ENCODE measurements at regions of chr16 and their contacts with region 1.

Region 1: DNA sequence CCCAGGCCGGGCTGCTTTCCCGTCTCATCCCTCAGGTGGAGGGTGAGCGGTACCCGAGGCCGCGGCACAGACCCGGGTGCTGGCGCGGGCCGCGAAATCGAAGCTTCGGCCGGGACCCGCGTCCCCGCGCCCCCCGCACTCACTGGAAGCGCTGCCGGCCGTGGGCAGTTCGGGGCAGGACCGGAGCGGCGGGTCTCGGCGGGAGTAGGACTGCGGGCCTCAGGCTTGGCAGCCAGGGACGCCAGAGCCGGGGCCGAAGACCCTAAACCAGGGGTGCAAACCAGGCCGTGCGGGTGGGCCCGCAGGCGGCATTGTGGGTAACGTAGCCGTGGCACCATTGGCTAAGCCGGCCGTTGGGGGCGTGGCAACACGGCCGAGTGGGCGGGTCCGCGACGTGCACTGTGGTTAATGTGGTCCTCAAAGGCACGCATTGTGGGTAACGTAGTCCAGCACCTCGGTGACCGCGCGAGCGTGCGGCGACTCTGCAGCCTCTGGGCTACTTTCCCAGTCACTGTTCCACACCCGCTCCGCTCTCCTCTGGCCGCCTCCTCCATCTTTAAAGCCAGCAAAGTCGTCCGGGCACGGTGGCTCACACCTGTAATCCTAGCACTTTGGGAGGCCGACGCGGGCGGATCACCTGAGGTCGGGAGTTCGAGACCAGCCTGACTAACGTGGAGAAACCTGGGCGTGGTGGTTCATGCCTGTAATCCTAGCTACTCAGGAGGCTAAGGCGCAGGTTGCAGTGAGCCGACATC is at the start of gene ZNF500:
- DNase-seq: peak; percentile 98
- H3K4me3 Mint-ChIP-seq: peak within 1 kb of the TSS; percentile 93
- H3K27ac Mint-ChIP-seq: peak within 1 kb of the TSS; percentile 93
- H3K4me1 Mint-ChIP-seq: peaks cover 35% of the 10 kb centered on the region
- H3K27me3 Mint-ChIP-seq: no peaks in the 10 kb centered on the region
- total RNA-seq, gene ZNF500: 8.9 to 11.2 TPM

Region 2: DNA sequence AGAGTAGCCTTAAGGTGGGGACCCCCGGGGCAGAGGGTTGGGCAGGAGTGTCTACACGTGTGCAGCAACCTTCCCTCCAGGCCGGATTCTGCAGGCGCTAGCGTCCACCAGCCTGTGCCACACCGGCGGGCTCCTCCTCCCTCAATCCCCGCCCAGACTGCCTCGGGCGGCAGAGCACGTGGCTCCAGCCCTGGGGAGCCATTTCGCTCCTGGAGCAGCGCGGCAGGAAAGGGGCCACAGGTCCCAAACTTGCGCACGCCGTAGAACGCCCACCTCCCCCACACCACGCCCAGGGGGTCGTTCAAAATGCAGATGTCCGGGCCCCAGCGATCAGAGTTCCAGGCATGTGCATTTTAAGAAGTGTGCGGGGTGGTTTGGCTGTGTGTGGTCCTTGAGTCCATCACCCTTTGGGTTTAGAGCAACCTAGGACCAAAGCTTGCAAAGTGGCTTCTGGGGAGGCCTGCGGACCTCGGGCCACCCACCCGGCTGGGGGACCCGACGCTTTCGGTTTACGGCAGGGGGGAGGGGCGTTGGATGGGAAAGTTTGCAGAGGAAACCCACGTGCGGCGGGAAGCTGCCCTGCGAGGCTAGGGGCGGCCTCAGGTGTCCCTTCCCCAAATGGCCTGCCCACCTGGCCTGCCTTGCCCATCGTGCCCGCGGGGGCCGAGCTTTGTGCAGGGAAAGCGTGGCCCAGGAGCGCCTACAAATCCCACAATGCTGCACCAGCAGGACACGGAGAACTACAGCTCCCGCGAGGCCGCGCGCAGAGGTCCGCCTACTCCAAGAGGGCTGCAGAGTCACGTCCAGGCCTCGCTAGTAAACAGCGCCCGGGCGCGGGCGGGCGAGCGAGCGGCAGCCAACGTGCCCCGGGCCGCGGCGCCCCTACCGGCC is 495.6 kb before region 1 on chr16:
- CTCF ChIA-PET with region 1: no interaction called
- intact Hi-C with region 1: loop called (anchors 5 kb)
- DNase-seq: peak; percentile 95
- H3K4me3 Mint-ChIP-seq: peak overlapping the region; percentile 86
- H3K27ac Mint-ChIP-seq: peak overlapping the region; percentile 94
- H3K4me1 Mint-ChIP-seq: peaks cover 12% of the 10 kb centered on the region
- H3K27me3 Mint-ChIP-seq: no peaks in the 10 kb centered on the region

Region 3: GRCh38 chr16:4544473-4544872 is 222.6 kb before region 1 on chr16:
- CTCF ChIA-PET with region 1: no interaction called
- intact Hi-C with region 1: no loop called
- DNase-seq: no peak
- H3K4me3 Mint-ChIP-seq: no peak overlapping the region
- H3K27ac Mint-ChIP-seq: no peak overlapping the region
- H3K4me1 Mint-ChIP-seq: peaks cover 4% of the 10 kb centered on the region
- H3K27me3 Mint-ChIP-seq: no peaks in the 10 kb centered on the region

Region 4: DNA sequence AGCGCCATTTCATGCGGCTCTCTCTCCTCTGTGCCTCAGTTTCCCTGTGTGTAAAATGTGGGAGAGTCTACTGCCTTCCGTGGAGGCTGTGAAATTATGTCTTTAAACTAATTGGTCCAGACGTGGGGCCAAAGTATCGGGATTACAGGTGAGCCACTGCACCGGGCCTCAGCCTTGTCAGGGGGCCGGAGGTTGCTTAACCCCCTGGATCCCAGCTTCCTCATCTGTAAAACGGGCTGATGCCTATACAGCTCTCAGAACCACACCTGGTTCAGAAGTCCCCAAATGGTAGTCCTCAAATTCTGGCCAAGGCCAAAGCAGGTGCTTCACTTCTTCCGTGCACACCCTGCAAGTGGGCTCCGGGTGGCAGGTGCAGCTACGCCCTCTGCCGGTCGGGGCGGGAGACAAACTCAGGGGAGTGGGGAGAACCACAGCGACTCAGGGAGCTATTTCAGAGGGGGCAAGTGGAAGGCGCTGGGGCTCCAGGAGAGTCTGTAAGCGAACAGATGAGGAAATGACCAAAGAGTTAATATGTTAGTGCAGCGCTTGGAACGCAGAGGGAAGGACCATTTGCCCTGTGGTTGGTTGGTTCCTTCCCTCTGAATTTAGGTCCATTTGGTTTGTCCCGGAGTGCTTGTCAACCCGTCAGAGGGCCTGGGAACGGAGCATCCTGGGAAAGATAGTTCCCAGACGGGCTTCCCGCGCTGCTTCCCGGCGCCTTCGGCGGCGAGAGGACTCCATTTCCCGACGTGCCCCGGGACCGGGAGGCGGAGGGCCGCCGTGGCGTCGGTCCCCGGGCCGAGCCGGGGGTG is 142.8 kb before region 1 on chr16 and contains the start of gene MGRN1:
- CTCF ChIA-PET with region 1: no interaction called
- intact Hi-C with region 1: loop called (anchors 1 kb)
- DNase-seq: peak; percentile 96
- H3K4me3 Mint-ChIP-seq: peak within 1 kb of the TSS; percentile 97
- H3K27ac Mint-ChIP-seq: peak within 1 kb of the TSS; percentile 99
- H3K4me1 Mint-ChIP-seq: peaks cover 30% of the 10 kb centered on the region
- H3K27me3 Mint-ChIP-seq: no peaks in the 10 kb centered on the region
- total RNA-seq, gene MGRN1: 46.3 to 48.8 TPM

Region 5: GRCh38 chr16:4660454-4661007 is 106.5 kb before region 1 on chr16:
- CTCF ChIA-PET with region 1: no interaction called
- intact Hi-C with region 1: no loop called
- DNase-seq: peak; percentile 89
- H3K4me3 Mint-ChIP-seq: no peak overlapping the region
- H3K27ac Mint-ChIP-seq: peak overlapping the region; percentile 61
- H3K4me1 Mint-ChIP-seq: peaks cover 65% of the 10 kb centered on the region
- H3K27me3 Mint-ChIP-seq: no peaks in the 10 kb centered on the region

Region 6: GRCh38 chr16:4734063-4734729 is 32.9 kb before region 1 on chr16 and contains the starts of genes ANKS3 and DNAAF8:
- CTCF ChIA-PET with region 1: interaction called, 3 read pairs
- intact Hi-C with region 1: loop called (anchors 1 kb)
- DNase-seq: peak; percentile 75
- H3K4me3 Mint-ChIP-seq: peak within 1 kb of the TSS; percentile 87
- H3K27ac Mint-ChIP-seq: peak within 1 kb of the TSS; percentile 46
- H3K4me1 Mint-ChIP-seq: peaks cover 16% of the 10 kb centered on the region
- H3K27me3 Mint-ChIP-seq: no peaks in the 10 kb centered on the region
- total RNA-seq, gene ANKS3: 8.2 to 11.7 TPM
- total RNA-seq, gene DNAAF8: 0.07 TPM in 1 of 2 experiments, not detected in the other

Region 7: GRCh38 chr16:4846891-4847773 is 80.1 kb after region 1 on chr16 and contains the starts of genes GLYR1 and UBN1:
- CTCF ChIA-PET with region 1: no interaction called
- intact Hi-C with region 1: loop called (anchors 1 kb)
- DNase-seq: peak; percentile 100
- H3K4me3 Mint-ChIP-seq: peak within 1 kb of the TSS; percentile 83
- H3K27ac Mint-ChIP-seq: peak within 1 kb of the TSS; percentile 80
- H3K4me1 Mint-ChIP-seq: peaks cover 54% of the 10 kb centered on the region
- H3K27me3 Mint-ChIP-seq: no peaks in the 10 kb centered on the region
- total RNA-seq, gene GLYR1: 62.2 to 65.0 TPM
- total RNA-seq, gene UBN1: 26.7 to 28.1 TPM